ENCODE measurements at regions of chr1 and their contacts with region 1.

Region 1: GRCh38 chr1:200488375-200489165 is 78.7 kb upstream of the ZNF281 start:
- DNase-seq: peak; percentile 50
- H3K4me3 Mint-ChIP-seq: no peak overlapping the region
- H3K27ac Mint-ChIP-seq: no peak overlapping the region
- H3K4me1 Mint-ChIP-seq: peaks cover 14% of the 10 kb centered on the region
- H3K27me3 Mint-ChIP-seq: peaks cover 18% of the 10 kb centered on the region

Region 2: GRCh38 chr1:200038981-200039848 is 449.4 kb before region 1 on chr1:
- CTCF ChIA-PET with region 1: no interaction called
- POLR2A ChIA-PET with region 1: no interaction called
- intact Hi-C with region 1: loop called (anchors 10 kb)
- DNase-seq: peak; percentile 41
- H3K4me3 Mint-ChIP-seq: peak overlapping the region; percentile 64
- H3K27ac Mint-ChIP-seq: no peak overlapping the region
- H3K4me1 Mint-ChIP-seq: peaks cover 40% of the 10 kb centered on the region
- H3K27me3 Mint-ChIP-seq: peaks cover 61% of the 10 kb centered on the region

Region 3: GRCh38 chr1:200258447-200259375 is 229.9 kb before region 1 on chr1:
- CTCF ChIA-PET with region 1: interaction called, 5 read pairs
- POLR2A ChIA-PET with region 1: no interaction called
- intact Hi-C with region 1: loop called (anchors 5 kb)
- DNase-seq: no peak
- H3K4me3 Mint-ChIP-seq: no peak overlapping the region
- H3K27ac Mint-ChIP-seq: no peak overlapping the region
- H3K4me1 Mint-ChIP-seq: peaks cover 18% of the 10 kb centered on the region
- H3K27me3 Mint-ChIP-seq: peaks cover 9% of the 10 kb centered on the region

Region 4: DNA sequence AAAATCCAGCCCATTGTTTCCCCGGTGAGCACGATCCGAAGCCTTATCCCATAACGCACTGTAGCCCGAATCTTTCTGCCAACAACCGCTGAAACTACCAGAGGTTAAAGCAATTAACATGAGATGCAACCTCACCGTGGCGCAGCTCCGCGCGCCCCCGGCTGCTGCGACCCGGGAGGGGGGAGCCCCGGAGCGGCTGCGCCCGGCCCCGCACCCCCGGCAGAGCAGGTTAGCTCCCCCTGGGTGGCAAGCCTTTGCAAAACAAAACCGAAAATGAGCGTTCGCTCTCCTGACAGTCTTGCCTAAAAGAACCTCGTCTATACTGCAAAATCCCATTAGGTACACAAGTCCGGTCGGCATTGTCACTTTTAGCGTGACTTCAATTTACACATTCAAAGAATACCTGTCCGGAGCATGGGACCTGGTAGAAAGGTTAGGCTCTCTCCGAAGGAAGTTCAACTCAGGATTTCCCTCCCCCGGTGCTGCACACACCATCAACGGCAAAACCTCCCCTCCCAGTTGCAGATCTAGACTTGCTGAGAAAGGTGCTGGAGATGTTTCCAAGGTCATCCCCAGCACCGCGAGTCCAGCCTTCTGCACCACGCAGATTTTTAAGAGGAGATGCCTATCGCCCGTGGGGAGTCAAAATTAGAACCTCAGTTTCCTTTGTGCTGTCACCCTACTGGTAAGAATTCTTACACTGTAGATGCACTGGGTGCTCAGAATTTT is 186.2 kb before region 1 on chr1:
- CTCF ChIA-PET with region 1: interaction called, 7 read pairs
- POLR2A ChIA-PET with region 1: no interaction called
- intact Hi-C with region 1: loop called (anchors 2 kb)
- DNase-seq: peak; percentile 67
- H3K4me3 Mint-ChIP-seq: peak overlapping the region; percentile 76
- H3K27ac Mint-ChIP-seq: no peak overlapping the region
- H3K4me1 Mint-ChIP-seq: peaks cover 14% of the 10 kb centered on the region
- H3K27me3 Mint-ChIP-seq: peaks cover 5% of the 10 kb centered on the region

Region 5: DNA sequence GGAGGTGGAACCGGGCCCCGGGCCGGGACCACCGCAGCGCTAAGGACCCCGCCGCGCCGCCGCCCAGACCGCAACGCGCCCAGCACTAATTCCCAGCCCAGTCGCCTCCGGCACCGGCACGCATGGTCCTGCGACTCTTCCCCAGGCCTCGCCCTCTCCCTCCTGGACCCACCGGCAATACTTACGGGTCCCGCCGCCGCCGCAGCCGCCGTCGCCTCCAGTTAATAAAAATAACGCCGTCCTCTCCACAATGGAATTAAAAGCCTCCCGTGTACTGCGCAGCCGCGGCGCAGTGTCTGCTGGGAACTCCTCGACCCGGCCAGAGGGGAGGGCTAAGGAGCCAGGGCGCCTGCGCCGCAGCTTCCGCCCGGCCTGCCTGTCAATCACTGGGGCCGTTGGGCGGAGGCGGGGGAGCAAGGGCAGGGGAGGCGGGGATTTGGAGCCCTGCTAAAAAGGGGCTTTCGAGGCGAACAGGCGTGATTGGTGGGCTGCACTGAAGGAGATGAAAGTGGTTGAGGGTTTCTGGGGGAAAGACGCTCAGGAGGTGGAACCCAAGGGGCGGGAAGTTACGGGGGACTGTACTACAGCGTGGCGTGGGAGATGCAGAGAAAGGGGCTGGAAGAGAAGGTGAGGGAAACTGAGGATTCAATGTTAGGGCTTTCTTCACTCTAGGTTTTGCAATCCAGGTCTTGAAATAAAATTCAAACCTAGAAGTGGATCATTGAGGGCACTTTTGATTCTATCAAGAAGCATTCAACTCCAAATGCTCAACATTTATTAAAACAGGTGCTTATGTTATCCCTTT is 78.6 kb before region 1 on chr1 and contains the start of gene ZNF281:
- CTCF ChIA-PET with region 1: interaction called, 13 read pairs
- POLR2A ChIA-PET with region 1: interaction called, 6 read pairs
- intact Hi-C with region 1: loop called (anchors 2 kb)
- DNase-seq: peak; percentile 97
- H3K4me3 Mint-ChIP-seq: peak within 1 kb of the TSS; percentile 87
- H3K27ac Mint-ChIP-seq: peak within 1 kb of the TSS; percentile 88
- H3K4me1 Mint-ChIP-seq: peaks cover 49% of the 10 kb centered on the region
- H3K27me3 Mint-ChIP-seq: no peaks in the 10 kb centered on the region
- total RNA-seq, gene ZNF281: 11.0 to 11.2 TPM

Region 6: GRCh38 chr1:200473698-200474371 is 14.7 kb before region 1 on chr1:
- CTCF ChIA-PET with region 1: interaction called, 12 read pairs
- POLR2A ChIA-PET with region 1: interaction called, 15 read pairs
- intact Hi-C with region 1: loop called (anchors 1 kb)
- DNase-seq: peak; percentile 69
- H3K4me3 Mint-ChIP-seq: peak overlapping the region; percentile 41
- H3K27ac Mint-ChIP-seq: peak overlapping the region; percentile 65
- H3K4me1 Mint-ChIP-seq: peaks cover 42% of the 10 kb centered on the region
- H3K27me3 Mint-ChIP-seq: peaks cover 13% of the 10 kb centered on the region